ENCODE measurements at regions of chr15 and their contacts with region 1.

Region 1: DNA sequence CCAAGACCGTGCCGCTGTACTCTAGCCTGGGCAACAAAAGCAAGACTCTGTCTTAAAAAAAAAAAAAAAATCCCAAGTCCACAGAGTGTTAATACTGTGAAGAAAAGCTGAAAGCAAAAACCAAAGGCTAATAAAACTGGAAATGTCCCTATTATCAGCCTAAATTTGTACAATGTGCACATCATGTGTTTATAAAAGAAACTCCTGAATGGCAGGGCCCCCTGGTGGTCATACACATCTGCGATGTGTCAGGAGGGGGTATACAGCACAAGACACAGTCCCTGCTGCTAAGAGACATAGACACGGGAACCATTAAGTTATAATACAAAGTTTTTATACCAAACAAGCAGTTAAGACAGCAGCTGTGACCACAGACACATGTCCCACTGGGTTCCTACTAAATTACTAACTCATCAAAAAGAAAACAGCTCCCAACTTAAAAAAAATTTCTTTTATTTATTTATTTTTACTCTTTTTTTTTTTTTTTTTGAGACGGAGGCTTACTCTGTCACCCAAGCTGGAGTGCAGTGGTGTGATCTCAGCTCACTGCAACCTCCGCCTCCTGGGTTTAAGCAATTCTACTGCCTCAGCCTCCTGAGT is 31.0 kb downstream of the IDH2 start:
- DNase-seq: peak; percentile 78
- H3K4me3 ChIP-seq: no peak overlapping the region
- H3K27ac ChIP-seq: peak overlapping the region; percentile 7
- H3K4me1 ChIP-seq: peaks cover 22% of the 10 kb centered on the region
- H3K27me3 ChIP-seq: no peaks in the 10 kb centered on the region
- CTCF ChIP-seq: peak; percentile 87

Region 2: GRCh38 chr15:89893696-89894455 is 177.4 kb before region 1 on chr15 and contains the start of gene AP3S2:
- intact Hi-C with region 1: loop called (anchors 10 kb)
- DNase-seq: peak; percentile 88
- H3K4me3 ChIP-seq: peak within 1 kb of the TSS; percentile 94
- H3K27ac ChIP-seq: peak within 1 kb of the TSS; percentile 95
- H3K4me1 ChIP-seq: peaks cover 30% of the 10 kb centered on the region
- H3K27me3 ChIP-seq: no peaks in the 10 kb centered on the region
- CTCF ChIP-seq: no peak
- total RNA-seq, gene AP3S2: 44.1 TPM

Region 3: GRCh38 chr15:90046911-90047392 is 24.4 kb before region 1 on chr15:
- intact Hi-C with region 1: no loop called
- DNase-seq: no peak
- H3K4me3 ChIP-seq: no peak overlapping the region
- H3K27ac ChIP-seq: no peak overlapping the region
- H3K4me1 ChIP-seq: peaks cover 29% of the 10 kb centered on the region
- H3K27me3 ChIP-seq: no peaks in the 10 kb centered on the region
- CTCF ChIP-seq: no peak